ENCODE measurements at regions of chr4 and their contacts with region 1.

Region 1: DNA sequence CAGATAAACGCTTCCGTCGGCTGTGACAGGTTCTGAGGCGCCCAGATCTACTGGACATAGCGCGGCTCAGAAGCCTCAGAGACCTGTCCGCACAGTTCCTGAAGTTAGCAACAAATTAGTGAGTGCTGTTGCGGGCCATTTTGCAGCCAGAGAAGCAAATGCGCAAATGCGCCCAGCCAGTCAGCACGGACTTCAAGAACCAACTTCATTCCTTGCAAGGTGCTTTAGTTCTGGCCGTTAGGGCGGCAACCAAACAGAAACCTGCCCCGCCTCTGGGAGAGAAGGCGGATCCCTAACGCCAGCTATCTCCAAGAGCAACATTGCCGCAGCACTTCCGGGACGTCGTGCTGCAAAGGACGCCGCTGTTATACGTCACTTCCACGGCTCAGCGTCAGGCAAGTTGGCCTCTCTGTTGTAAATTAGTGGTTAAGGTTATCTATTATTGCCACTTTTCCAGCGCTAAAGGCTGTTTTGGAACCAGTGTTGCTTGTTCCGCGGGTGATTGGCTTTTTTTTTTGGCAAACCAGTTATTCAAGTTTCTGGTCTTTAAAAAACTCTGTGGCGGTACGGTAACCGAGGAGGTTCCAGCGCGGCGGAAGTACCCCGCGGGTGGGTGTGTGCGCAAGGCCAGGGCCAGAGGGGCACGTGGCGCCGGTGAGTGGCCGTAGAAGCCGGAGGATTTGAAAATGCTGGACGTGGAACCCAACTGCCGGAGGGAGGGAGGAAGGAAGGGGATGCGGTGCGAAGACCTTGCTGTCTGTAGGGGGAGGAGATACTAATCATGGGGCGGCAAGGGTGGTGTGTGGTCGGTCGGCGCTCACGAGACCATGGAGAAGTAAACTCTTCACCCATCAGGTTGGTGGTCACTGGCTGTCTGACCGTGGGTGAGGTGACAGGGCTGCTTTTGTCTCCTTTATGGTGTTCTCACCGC is at the start of gene GAR1:
- DNase-seq: peak; percentile 96
- H3K4me3 ChIP-seq: peak within 1 kb of the TSS; percentile 65
- H3K27ac ChIP-seq: peak within 1 kb of the TSS; percentile 78
- H3K4me1 ChIP-seq: peaks cover 8% of the 10 kb centered on the region
- H3K27me3 ChIP-seq: no peaks in the 10 kb centered on the region
- CTCF ChIP-seq: no peak
- total RNA-seq, gene GAR1: 16.8 to 21.0 TPM

Region 2: DNA sequence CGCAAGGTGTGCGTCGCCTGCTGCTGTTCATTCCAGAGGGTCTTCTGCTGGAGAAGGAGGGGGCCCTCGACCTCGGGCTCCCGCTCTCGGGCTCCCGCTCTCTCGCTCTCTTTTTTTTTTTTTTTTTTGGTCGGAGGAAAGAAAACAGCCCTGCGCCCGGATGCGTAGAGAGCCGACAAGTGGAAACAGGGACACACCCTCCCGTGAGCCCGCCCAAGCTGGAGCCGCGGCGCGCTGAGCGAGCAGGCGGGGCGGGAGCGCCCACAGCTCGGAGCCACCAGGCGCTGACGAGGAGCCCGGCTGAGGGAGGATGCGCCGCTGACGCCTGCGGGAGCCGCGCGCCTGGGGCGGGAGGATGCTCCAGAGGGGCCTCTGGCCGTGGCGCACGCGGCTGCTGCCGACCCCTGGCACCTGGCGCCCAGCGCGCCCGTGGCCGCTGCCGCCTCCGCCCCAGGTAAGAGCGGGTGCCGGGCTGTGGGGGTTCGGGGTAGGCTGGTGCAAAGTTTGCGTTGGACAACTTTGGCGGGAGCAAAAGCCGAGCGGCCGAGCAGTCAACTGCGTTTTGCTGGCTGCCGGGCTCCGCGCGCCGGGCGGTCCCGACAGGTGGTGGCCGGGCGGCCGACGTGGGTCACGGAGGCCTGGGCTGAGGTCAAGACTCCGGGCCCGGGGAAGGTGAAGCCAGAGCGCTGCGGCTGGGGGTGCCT is 255.3 kb before region 1 on chr4 and contains the start of gene MCUB:
- intact Hi-C with region 1: loop called (anchors 10 kb)
- DNase-seq: peak; percentile 90
- H3K4me3 ChIP-seq: peak within 1 kb of the TSS; percentile 84
- H3K27ac ChIP-seq: peak within 1 kb of the TSS; percentile 91
- H3K4me1 ChIP-seq: no peaks in the 10 kb centered on the region
- H3K27me3 ChIP-seq: no peaks in the 10 kb centered on the region
- CTCF ChIP-seq: no peak
- total RNA-seq, gene MCUB: 10.4 to 11.7 TPM

Region 3: GRCh38 chr4:109749388-109750082 is 65.9 kb before region 1 on chr4:
- intact Hi-C with region 1: no loop called
- DNase-seq: no peak
- H3K4me3 ChIP-seq: no peak overlapping the region
- H3K27ac ChIP-seq: no peak overlapping the region
- H3K4me1 ChIP-seq: no peaks in the 10 kb centered on the region
- H3K27me3 ChIP-seq: no peaks in the 10 kb centered on the region
- CTCF ChIP-seq: no peak

Measured in colonic mucosa (tissue), 4 donors.